Activated T-helper 2 cell treated with anti-CD3 and anti-CD28 coated beads, Interferon-gamma antibody, Interleukin-2, Interleukin-4, amounts not matched to agents 10 μg/mL and 5 μg/mL and 100 μg/mL, durations not matched to agents 14 hours and 24 hours and 36 hours (primary cell): ENCODE measurements at regions of chr4 and their contacts with region 1.

Region 1: GRCh38 chr4:173168396-173169177 is at the start of gene GALNT7:
- DNase-seq: peak; percentile 45
- H3K4me3 Mint-ChIP-seq: peak within 1 kb of the TSS; percentile 98
- H3K27ac Mint-ChIP-seq: peak within 1 kb of the TSS; percentile 95
- H3K4me1 Mint-ChIP-seq: peaks cover 43% of the 10 kb centered on the region
- H3K27me3 Mint-ChIP-seq: no peaks in the 10 kb centered on the region
- total RNA-seq, gene GALNT7: 28.9 and 33.1 TPM in 2 replicates

Region 2: GRCh38 chr4:172776203-172776861 is 392.3 kb before region 1 on chr4:
- intact Hi-C with region 1: no loop called
- DNase-seq: no peak
- H3K4me3 Mint-ChIP-seq: no peak overlapping the region
- H3K27ac Mint-ChIP-seq: no peak overlapping the region
- H3K4me1 Mint-ChIP-seq: no peaks in the 10 kb centered on the region
- H3K27me3 Mint-ChIP-seq: no peaks in the 10 kb centered on the region

Region 3: GRCh38 chr4:173013232-173013930 is 155.2 kb before region 1 on chr4:
- intact Hi-C with region 1: loop called (anchors 5 kb)
- DNase-seq: no peak
- H3K4me3 Mint-ChIP-seq: no peak overlapping the region
- H3K27ac Mint-ChIP-seq: no peak overlapping the region
- H3K4me1 Mint-ChIP-seq: no peaks in the 10 kb centered on the region
- H3K27me3 Mint-ChIP-seq: peaks cover 9% of the 10 kb centered on the region

Region 4: GRCh38 chr4:173181769-173182354 is 13.3 kb after region 1 on chr4:
- intact Hi-C with region 1: loop called (anchors 1 kb)
- DNase-seq: no peak
- H3K4me3 Mint-ChIP-seq: no peak overlapping the region
- H3K27ac Mint-ChIP-seq: no peak overlapping the region
- H3K4me1 Mint-ChIP-seq: peaks cover 20% of the 10 kb centered on the region
- H3K27me3 Mint-ChIP-seq: no peaks in the 10 kb centered on the region

Region 5: DNA sequence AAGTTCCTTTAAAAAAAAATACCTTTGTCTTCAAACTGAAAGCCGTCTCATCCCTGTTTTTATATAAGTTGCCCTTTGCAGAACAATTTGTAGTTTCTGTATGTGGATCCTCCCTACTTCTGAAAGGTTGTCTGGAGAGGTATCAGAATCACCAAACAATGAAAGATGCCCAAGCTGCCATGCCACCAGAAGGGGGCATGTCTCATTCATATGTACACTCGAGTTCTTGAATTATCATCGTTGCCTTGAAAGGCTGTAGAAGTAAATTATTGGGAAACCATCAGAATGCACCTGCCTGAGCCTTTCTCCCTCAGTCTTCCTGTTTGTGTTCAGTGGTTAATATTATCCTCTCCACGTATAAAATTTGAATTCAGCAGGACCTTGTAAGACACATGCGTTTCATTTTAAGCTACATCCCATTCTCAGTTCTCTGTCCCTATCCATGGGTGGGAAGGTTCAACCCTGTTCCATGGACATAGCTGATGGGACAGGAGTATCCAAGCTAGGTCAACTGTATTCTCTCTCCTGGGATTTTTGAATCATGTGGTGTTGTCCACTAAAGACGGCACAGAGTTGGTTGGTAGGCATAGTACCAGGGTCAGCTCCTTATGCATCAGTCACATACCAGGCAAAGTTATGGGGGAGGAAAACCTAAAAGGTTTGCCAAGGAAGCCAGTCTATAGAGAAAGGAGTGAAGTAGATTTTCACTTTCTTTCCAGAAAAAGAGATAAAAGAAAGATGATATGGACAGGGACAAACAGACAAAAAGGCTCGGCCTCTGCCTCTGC is 24.0 kb after region 1 on chr4:
- intact Hi-C with region 1: loop called (anchors 1 kb)
- DNase-seq: no peak
- H3K4me3 Mint-ChIP-seq: no peak overlapping the region
- H3K27ac Mint-ChIP-seq: peak overlapping the region; percentile 78
- H3K4me1 Mint-ChIP-seq: peaks cover 37% of the 10 kb centered on the region
- H3K27me3 Mint-ChIP-seq: no peaks in the 10 kb centered on the region

Region 6: GRCh38 chr4:173257732-173258717 is 89.4 kb after region 1 on chr4:
- intact Hi-C with region 1: loop called (anchors 2 kb)
- DNase-seq: peak; percentile 29
- H3K4me3 Mint-ChIP-seq: no peak overlapping the region
- H3K27ac Mint-ChIP-seq: no peak overlapping the region
- H3K4me1 Mint-ChIP-seq: peaks cover 2% of the 10 kb centered on the region
- H3K27me3 Mint-ChIP-seq: no peaks in the 10 kb centered on the region

Region 7: GRCh38 chr4:173334085-173334772 is 165.6 kb after region 1 on chr4 and contains the start of gene HMGB2:
- intact Hi-C with region 1: loop called (anchors 2 kb)
- DNase-seq: peak; percentile 100
- H3K4me3 Mint-ChIP-seq: peak within 1 kb of the TSS; percentile 97
- H3K27ac Mint-ChIP-seq: peak within 1 kb of the TSS; percentile 99
- H3K4me1 Mint-ChIP-seq: peaks cover 44% of the 10 kb centered on the region
- H3K27me3 Mint-ChIP-seq: no peaks in the 10 kb centered on the region
- total RNA-seq, gene HMGB2: 380 and 393 TPM in 2 replicates